Aorta (tissue), 5 donors: ENCODE measurements at regions of chr9 and their contacts with region 1.

Region 1: DNA sequence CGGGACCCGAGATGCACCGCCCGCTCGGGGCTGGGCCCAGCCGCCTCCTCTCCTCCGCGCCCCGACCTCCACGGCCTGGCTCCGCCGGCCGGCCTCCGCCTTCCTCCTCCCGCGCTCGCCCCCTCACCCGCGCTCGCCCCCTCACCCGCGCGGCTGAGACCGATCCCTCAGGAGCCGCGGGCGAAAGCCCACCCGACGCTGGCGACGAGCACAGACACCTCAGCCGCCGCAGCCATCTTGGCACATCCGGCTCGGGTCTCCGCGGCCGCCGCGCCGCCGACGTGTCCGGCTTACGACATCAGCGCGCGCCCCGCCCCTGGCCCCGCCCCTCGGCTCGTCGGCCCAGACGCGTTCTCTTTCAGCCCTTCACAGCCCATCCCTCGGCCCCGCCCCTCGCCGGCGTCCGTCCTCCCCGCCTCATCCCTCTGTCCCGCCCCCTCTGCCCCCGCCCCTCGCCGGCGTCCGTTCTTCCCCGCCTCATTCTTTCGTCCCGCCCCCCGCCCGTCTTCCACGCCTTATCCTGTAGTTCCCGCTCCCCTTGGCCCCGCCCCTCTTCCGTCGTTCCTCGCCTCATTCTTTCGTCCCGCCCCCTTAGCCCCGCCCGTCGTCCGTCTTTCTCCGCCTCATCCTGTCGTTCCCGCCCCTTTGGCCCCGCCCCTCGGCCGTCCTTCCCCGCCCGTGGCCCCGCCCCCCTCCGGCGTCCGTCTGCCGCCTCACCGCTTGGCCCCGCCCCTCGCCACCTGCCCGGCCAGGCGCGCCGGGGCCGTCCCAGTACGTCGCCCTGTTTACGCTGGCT is at the start of gene SEC16A:
- DNase-seq: peak; percentile 100
- ATAC-seq: peak; percentile 92
- H3K4me3 ChIP-seq: peak within 1 kb of the TSS; percentile 71 to 87
- H3K27ac ChIP-seq: peak within 1 kb of the TSS; percentile 79 to 98
- H3K4me1 ChIP-seq: no peaks in the 10 kb centered on the region
- H3K27me3 ChIP-seq: no peaks in the 10 kb centered on the region
- total RNA-seq, gene SEC16A: 57.1 to 59.1 TPM

Region 2: GRCh38 chr9:136244122-136244968 is 238.6 kb before region 1 on chr9:
- intact Hi-C with region 1: no loop called
- DNase-seq: no peak
- ATAC-seq: no peak
- H3K4me3 ChIP-seq: no peak overlapping the region
- H3K27ac ChIP-seq: no peak overlapping the region
- H3K4me1 ChIP-seq: no peaks in the 10 kb centered on the region
- H3K27me3 ChIP-seq: no peaks in the 10 kb centered on the region

Region 3: GRCh38 chr9:136410500-136411287 is 72.3 kb before region 1 on chr9 and contains the starts of genes ENTR1 and PMPCA:
- intact Hi-C with region 1: loop called in 1 of 2 experiments (anchors 5 kb)
- DNase-seq: peak; percentile 96 to 99
- ATAC-seq: peak; percentile 93
- H3K4me3 ChIP-seq: peak within 1 kb of the TSS; percentile 44 to 91
- H3K27ac ChIP-seq: peak within 1 kb of the TSS in 1 of 2 donors; percentile 9
- H3K4me1 ChIP-seq: no peaks in the 10 kb centered on the region
- H3K27me3 ChIP-seq: no peaks in the 10 kb centered on the region
- total RNA-seq, gene ENTR1: 27.1 to 39.0 TPM
- total RNA-seq, gene PMPCA: 31.2 to 38.8 TPM

Region 4: DNA sequence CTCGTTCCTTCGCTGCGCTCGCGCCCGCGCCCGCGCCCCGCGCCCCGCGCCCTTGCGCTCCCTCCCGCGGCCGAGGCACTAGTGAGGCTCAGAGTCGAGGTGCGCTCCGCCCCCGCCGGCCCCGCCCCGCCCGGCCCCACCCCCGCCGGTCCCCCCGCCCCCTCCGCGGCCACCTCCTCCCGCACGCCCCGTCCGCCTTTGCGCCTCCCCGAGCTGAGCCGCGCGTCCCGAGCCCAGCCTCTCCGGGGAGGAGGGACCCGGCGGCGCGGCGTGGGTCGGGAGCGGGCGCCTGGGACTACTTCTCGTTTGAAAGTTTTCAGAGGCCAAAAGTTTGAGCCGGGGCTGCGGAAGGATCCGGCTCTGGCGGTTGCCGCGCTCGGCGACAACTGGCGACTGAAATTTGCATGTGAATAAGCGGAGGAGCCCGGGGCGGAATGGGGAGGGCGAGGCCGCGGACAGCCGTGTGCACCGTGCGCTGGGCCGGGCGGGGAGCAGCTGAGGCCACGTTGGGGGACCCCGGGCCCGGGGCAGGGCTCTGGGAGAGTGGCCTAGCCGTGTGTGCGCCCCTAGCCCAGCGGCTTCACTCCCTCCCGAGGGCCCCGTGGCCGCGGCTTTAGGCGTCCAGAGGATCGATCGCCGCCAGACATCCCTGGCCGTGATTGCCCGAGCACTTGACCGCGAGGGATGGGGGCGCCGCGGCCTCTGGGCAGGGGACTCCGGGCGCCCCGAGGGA is 63.1 kb after region 1 on chr9 and contains the start of gene NOTCH1:
- intact Hi-C with region 1: loop called in 1 of 2 experiments (anchors 1 kb)
- DNase-seq: peak; percentile 96 to 97
- ATAC-seq: peak; percentile 88
- H3K4me3 ChIP-seq: peak within 1 kb of the TSS; percentile 84 to 87
- H3K27ac ChIP-seq: peak within 1 kb of the TSS; percentile 16 to 72
- H3K4me1 ChIP-seq: no peaks in the 10 kb centered on the region
- H3K27me3 ChIP-seq: no peaks in the 10 kb centered on the region
- total RNA-seq, gene NOTCH1: 47.4 to 81.6 TPM

Region 5: GRCh38 chr9:136629752-136630661 is 147.0 kb after region 1 on chr9:
- intact Hi-C with region 1: loop called (anchors 1 kb)
- DNase-seq: peak in 1 of 2 donors; percentile 71
- ATAC-seq: peak; percentile 53
- H3K4me3 ChIP-seq: no peak overlapping the region
- H3K27ac ChIP-seq: no peak overlapping the region
- H3K4me1 ChIP-seq: no peaks in the 10 kb centered on the region
- H3K27me3 ChIP-seq: no peaks in the 10 kb centered on the region

Region 6: DNA sequence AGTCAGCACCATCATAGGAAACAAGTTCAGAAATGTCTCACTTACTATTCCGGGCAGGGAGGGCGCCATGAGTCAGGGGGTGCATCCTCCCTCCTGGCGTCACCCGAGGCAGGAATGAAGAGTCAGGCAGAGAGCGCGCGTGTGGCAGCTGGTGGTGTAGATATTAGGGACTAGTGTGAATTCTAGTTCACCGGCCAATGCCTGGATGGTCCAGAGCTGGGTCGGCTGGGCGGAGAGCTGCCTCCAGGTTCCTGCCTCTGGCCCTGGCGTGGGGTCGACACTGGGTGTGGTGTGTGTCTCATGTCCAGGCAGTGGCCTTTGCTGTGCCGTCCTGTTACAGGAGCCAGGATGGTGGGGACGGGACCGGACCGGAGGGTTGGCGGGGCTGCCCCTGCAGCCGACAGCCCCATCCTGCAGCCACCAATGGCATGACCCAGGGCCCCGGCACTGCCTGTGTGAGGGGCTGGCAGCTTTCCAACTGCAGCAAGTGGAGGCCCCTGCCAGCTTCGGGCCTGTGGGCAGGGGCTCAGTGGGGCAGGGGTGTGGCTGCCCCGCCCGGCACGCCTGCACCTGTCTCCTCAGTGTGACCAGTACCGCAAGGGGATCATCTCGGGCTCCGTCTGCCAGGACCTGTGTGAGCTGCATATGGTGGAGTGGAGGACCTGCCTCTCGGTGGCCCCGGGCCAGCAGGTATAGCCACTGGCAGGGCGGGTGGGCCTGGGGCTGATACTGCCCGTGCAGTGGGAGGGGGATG is 238.5 kb after region 1 on chr9:
- intact Hi-C with region 1: no loop called
- DNase-seq: no peak
- ATAC-seq: peak; percentile 2
- H3K4me3 ChIP-seq: no peak overlapping the region
- H3K27ac ChIP-seq: no peak overlapping the region
- H3K4me1 ChIP-seq: no peaks in the 10 kb centered on the region
- H3K27me3 ChIP-seq: no peaks in the 10 kb centered on the region